ENCODE measurements at regions of chr5 and their contacts with region 1.

Region 1: DNA sequence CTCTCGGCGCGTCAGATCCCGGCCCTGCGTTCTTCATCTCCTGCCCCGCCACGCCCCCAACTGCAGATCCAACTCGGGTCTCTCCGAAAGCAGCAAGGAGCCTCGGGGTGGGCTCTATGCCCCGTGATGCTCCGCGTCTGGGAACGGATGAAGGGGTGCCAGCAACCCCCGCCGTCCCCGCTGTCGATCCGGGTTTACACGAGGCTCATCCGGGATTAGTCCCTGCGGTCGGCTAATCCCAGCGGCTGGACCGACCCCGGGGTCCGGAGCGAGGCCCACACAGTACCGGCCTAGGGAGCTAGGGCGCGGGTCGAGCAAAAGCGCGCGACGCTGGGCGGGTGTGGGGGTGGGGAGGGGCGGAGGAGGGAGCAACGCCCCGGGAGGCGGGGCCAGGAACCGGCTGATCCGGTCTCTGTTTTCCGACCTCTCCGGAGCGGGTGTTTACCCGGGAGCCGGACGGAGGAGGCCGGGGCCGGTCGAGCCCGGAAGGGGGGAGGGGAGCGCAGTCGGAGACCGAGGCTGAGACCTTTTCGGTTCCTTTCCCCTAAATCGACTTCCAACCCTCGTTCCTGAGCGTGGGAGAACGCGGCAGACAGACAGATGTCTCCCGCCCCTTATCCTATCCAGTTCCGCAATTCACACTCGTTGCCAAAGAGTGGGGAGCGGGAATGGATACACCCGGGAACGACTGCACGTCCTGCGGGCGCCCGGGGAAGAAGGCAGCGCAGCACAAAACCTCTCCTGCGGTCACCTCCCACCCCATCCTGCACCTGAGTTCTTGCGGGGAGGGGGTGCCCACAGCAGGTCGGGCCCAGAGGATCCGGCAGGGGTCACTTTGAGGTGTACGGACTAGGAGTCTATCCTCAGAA is 28.6 kb downstream of the PCDH1 start:
- DNase-seq: peak; percentile 94
- ATAC-seq: peak; percentile 47
- H3K4me3 Mint-ChIP-seq: peak overlapping the region; percentile 73
- H3K27ac Mint-ChIP-seq: peak overlapping the region; percentile 99
- H3K4me1 Mint-ChIP-seq: peaks cover 68% of the 10 kb centered on the region
- H3K27me3 Mint-ChIP-seq: no peaks in the 10 kb centered on the region
- CTCF ChIP-seq: no peak

Region 2: GRCh38 chr5:141816598-141817372 is 32.8 kb before region 1 on chr5:
- CTCF ChIA-PET with region 1: interaction called, 43 read pairs
- POLR2A ChIA-PET with region 1: interaction called, 31 read pairs
- DNase-seq: peak; percentile 84
- ATAC-seq: peak; percentile 66
- H3K4me3 Mint-ChIP-seq: peak overlapping the region; percentile 8; the same call in 1 of the 2 replicates
- H3K27ac Mint-ChIP-seq: peak overlapping the region; percentile 96
- H3K4me1 Mint-ChIP-seq: peaks cover 87% of the 10 kb centered on the region
- H3K27me3 Mint-ChIP-seq: peaks cover 2% of the 10 kb centered on the region; the same call in 1 of the 2 replicates
- CTCF ChIP-seq: no peak

Region 3: DNA sequence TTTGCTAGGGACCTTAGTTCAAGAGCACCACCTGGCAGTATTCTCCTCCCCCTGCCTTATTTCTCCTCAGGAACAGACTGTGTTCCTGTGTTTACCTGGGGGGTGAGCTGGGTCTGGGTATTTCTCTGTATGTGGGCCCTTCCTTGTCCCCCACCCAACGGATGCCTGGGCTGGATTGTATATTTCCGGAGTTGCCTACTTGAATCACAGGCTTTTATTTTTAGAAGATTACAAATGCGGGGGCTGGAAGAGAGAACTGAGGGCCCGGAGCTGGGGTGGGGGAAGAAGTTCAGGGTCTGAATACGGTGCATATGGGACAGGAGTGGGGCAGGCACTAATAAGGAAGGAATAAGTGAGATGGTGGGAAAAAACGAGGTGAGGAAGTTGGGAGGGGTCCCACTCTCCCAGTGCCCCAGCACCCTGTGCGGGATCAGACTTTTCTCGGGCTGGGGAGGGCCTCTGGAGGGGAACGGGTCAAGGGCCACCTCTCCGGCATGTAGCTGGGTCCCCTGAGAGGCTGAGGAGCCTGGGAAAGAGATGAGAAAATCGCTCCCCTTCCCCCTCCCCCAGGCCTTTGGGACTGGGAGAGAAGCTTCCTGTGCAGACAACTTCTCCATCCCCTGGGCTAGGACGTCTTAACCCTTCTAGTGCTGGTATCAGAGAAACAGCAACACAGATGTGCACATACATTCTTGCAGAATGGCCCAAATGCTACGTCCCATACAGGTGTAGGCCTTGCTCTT is 13.5 kb before region 1 on chr5:
- CTCF ChIA-PET with region 1: interaction called, 10 read pairs
- POLR2A ChIA-PET with region 1: interaction called, 54 read pairs
- DNase-seq: no peak
- ATAC-seq: peak; percentile 5; the same call in 1 of the 2 replicates
- H3K4me3 Mint-ChIP-seq: peak overlapping the region; percentile 29; the same call in 1 of the 2 replicates
- H3K27ac Mint-ChIP-seq: peak overlapping the region; percentile 96
- H3K4me1 Mint-ChIP-seq: peaks cover 76% of the 10 kb centered on the region
- H3K27me3 Mint-ChIP-seq: peaks cover 8% of the 10 kb centered on the region
- CTCF ChIP-seq: no peak